Activated CD8-positive, alpha-beta T cell treated with anti-CD3 and anti-CD28 coated beads, Interleukin-2, amount 10 ng/mL, durations not matched to agents 7 days and 5 days (primary cell): ENCODE measurements at regions of chr12 and their contacts with region 1.

Region 1: DNA sequence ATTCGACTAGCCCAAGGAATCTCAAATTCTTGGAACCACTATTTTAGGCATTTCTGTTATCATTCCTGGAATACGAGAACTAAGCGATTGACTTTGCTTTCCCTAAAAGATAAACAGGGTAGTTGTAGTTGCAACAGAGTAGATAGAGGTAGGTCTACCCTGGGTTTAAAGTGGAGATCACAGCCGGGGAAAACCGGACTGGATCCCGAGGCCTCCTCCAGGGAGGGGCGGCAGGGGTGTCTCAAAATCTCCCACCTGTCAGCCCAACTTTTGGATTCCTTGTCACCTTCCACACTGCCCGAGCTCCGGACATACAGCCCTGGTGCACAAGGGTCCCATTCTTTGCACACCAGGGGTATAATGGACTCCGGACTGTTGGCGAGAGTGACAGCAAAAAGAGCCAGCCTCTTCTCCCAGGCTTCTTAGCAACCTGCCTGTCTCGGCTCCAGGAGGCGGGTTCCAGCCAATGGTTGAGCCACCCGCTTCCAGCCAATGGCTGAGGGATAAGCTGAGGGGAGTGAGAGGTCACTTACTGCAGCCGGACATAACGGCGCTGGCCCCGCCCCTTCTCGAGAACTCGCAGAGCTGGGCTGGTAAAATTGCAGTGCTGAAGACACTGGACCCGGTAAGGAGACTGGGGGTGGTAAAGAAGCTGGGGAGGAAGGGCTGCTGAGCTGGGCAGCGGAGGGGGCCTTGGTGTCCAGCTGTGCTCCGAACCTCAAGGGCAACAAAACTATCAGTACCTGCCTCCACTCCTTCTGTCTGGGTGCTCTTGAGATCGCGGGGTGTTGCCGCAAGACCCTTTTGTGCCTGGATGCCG is at the start of gene SUOX:
- DNase-seq: peak; percentile 63
- ATAC-seq: peak; percentile 73
- H3K4me3 Mint-ChIP-seq: peak within 1 kb of the TSS; percentile 76
- H3K27ac Mint-ChIP-seq: peak within 1 kb of the TSS; percentile 58
- H3K4me1 Mint-ChIP-seq: peaks cover 37% of the 10 kb centered on the region
- H3K27me3 Mint-ChIP-seq: no peaks in the 10 kb centered on the region
- total RNA-seq, gene SUOX: 5.8 to 6.8 TPM

Region 2: GRCh38 chr12:55982319-55982936 is 14.5 kb before region 1 on chr12:
- CTCF ChIA-PET with region 1: interaction called, 30 read pairs
- POLR2A ChIA-PET with region 1: interaction called, 4 read pairs
- DNase-seq: no peak
- ATAC-seq: peak; percentile 47
- H3K4me3 Mint-ChIP-seq: no peak overlapping the region
- H3K27ac Mint-ChIP-seq: no peak overlapping the region
- H3K4me1 Mint-ChIP-seq: peaks cover 6% of the 10 kb centered on the region
- H3K27me3 Mint-ChIP-seq: no peaks in the 10 kb centered on the region

Region 3: DNA sequence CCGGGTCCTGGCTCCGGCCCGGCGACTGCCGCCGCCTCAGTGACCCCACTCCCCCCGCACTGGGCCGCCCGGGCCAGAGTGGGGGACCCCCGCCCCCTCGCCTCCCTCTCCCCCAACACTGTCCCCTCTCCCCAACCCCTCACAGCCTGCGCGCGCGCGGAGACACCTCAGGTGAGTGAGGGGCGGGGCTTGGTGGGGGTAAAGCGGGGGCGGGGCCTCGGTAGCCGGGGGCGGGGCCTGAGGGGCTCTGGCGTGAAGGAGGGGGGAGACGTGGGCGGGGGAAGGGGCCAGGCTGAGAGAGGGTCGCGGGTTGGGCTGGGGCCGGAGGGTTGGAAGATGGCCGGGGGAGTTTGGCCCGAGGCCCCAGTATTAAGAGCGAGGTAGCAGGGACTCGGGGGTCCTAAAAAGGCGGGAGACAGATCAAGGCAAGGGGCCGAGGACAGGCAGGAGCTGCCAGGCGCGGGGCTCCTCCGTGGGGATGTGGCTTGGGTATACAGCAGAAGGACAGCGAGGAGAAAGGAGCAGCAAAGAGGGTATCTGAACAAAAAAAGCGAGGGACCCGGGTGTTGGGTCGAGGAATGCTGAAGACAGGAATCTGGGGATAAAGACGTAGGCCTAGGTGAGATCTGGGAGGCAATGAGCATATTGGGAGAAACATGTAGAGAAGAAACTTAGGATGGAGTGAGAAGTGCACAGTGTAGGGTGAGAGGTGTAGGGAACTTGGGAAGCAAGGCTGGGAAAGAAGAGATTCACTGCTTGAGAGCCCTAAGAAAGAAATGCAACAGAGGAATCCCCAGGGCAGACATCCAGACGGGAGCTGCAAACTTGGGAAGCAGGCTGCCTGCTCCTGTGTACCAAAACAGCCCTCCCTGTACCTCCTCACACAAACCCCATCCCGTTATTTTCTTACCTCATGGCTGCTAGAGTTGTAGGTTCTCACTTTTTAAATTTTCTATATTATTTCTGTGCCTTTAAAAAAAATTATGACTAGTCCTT is 10.9 kb after region 1 on chr12:
- CTCF ChIA-PET with region 1: interaction called, 33 read pairs
- POLR2A ChIA-PET with region 1: interaction called, 6 read pairs
- DNase-seq: peak; percentile 71
- ATAC-seq: peak; percentile 87
- H3K4me3 Mint-ChIP-seq: peak overlapping the region; percentile 82
- H3K27ac Mint-ChIP-seq: peak overlapping the region; percentile 86
- H3K4me1 Mint-ChIP-seq: peaks cover 29% of the 10 kb centered on the region
- H3K27me3 Mint-ChIP-seq: no peaks in the 10 kb centered on the region

Region 4: GRCh38 chr12:56014206-56014605 is 17.3 kb after region 1 on chr12:
- CTCF ChIA-PET with region 1: interaction called, 25 read pairs
- POLR2A ChIA-PET with region 1: interaction called, 4 read pairs
- DNase-seq: no peak
- ATAC-seq: no peak
- H3K4me3 Mint-ChIP-seq: no peak overlapping the region
- H3K27ac Mint-ChIP-seq: no peak overlapping the region
- H3K4me1 Mint-ChIP-seq: peaks cover 17% of the 10 kb centered on the region
- H3K27me3 Mint-ChIP-seq: no peaks in the 10 kb centered on the region

Region 5: DNA sequence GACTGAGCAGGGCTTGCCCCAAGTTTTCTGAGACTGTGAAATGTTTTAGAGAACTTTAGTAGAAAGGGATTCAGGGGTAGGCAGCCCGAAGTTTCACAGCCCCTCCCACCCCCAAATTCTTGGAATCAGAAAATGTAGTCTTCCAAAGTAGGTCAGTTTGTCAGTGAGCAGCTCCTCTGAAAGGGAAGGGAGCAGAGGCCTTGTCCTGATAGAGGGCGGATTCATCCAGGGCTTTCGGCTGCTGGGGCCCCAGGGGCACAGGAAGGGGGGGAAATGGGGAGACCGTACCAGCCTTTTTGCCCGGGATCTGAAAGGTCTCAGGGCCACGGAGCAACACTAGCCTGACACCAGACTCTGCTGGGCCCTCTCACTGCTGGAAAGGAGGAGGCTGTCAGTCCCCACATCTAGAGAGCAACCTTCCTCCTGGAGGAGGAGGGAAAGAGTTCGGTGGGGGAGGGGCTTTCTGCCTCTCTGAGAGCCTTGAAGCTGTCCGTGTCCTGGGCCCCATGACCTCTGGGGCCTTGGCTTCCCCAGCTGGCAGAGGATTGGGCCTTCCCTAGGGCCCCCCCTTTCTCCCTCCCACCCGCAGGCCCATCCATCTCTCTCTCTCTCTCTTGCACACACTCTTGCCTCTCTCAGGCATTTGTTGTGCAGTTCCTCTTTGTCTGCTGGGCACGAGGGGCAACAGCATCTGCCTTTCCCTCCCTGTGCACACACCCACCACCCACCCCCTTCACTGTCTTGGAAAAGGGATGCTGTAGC is 23.7 kb after region 1 on chr12 and contains the start of gene IKZF4:
- CTCF ChIA-PET with region 1: interaction called, 34 read pairs
- POLR2A ChIA-PET with region 1: no interaction called
- DNase-seq: peak; percentile 42
- ATAC-seq: peak; percentile 37
- H3K4me3 Mint-ChIP-seq: peak within 1 kb of the TSS; percentile 88
- H3K27ac Mint-ChIP-seq: peak within 1 kb of the TSS; percentile 96
- H3K4me1 Mint-ChIP-seq: peaks cover 53% of the 10 kb centered on the region
- H3K27me3 Mint-ChIP-seq: no peaks in the 10 kb centered on the region
- total RNA-seq, gene IKZF4: 19.9 to 20.7 TPM

Region 6: DNA sequence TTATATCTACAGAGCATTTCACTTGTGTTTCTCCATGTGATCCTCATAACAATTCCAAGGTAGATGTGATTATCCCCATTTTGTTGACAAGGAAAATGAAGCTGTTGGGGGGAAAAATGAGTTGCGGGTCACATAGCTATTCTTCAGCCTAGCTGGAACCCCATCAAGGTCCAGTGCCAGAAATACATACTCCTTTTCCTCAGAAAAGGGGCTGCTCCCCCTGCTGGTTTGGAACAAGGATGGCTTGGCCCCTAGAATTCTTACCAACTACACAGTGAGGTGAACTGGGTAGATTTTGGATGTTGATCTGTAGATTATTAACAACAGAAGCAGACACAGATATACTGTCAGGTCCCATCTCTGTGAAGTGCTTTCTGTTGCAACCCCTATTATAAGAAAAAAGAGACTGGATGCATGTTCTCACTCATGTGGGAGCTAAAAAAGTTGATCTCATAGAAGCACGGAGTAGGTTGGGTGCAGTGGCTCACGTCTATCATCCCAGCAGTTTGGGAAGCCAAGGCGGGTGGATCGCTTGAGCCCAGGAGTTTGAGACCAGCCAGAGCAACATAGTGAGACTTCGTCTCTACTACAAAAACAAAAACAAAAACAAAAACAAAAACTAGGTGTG is 32.9 kb after region 1 on chr12:
- CTCF ChIA-PET with region 1: interaction called, 60 read pairs
- POLR2A ChIA-PET with region 1: interaction called, 3 read pairs
- DNase-seq: peak; percentile 64
- ATAC-seq: peak; percentile 64
- H3K4me3 Mint-ChIP-seq: no peak overlapping the region
- H3K27ac Mint-ChIP-seq: peak overlapping the region; percentile 8
- H3K4me1 Mint-ChIP-seq: peaks cover 54% of the 10 kb centered on the region
- H3K27me3 Mint-ChIP-seq: no peaks in the 10 kb centered on the region

Region 7: DNA sequence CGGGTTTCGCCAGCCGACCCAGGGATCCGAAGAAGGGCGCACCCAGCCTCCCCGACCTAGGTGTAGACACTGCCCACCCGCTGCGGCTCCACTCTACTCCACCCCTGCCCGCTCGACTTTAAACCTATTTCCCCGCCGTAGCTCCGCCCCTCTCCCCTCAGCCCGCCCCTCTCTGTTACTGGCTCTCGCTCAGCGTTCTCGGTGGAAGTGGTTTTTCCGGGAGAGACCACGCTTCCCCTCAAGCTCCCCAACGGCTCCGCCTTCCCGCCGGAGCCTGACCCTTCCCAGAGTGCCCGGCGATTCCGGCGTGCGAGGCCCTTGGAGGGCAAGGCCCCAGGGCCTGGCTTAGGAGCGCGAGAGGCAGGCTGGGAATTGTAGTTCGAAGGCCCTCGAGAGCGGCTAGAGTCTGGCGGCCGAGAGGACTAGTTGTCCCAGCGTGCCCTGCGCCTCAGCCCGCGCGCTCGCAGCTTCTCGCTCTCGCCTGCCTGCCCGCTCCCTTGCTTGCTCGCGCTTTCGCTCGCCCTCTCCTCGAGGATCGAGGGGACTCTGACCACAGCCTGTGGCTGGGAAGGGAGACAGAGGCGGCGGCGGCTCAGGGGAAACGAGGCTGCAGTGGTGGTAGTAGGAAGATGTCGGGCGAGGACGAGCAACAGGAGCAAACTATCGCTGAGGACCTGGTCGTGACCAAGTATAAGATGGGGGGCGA is 107.3 kb after region 1 on chr12 and contains the start of gene PA2G4:
- CTCF ChIA-PET with region 1: interaction called, 13 read pairs
- POLR2A ChIA-PET with region 1: interaction called, 6 read pairs
- DNase-seq: peak; percentile 99
- ATAC-seq: peak; percentile 94
- H3K4me3 Mint-ChIP-seq: peak within 1 kb of the TSS; percentile 100
- H3K27ac Mint-ChIP-seq: peak within 1 kb of the TSS; percentile 98
- H3K4me1 Mint-ChIP-seq: peaks cover 64% of the 10 kb centered on the region
- H3K27me3 Mint-ChIP-seq: no peaks in the 10 kb centered on the region
- total RNA-seq, gene PA2G4: 316 to 323 TPM

Region 8: DNA sequence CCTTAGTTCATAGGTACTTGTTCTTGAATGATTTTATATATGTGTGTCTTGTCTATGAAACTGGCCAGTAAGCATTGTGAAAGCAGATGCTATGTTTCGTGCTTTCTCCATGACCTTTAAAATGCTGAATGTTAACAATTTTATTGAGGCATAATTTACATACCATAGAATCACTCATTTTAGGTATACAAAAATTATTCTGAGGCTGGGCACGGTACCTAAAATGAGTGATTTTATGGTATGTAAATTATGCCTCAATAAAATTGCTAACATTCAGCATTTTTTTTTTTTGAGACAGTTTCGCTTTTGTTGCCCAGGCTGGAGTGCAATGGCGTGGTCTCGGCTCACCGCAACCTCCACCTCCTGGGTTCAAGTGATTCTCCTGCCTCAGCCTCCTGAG is 138.0 kb after region 1 on chr12:
- CTCF ChIA-PET with region 1: no interaction called
- POLR2A ChIA-PET with region 1: no interaction called
- DNase-seq: no peak
- ATAC-seq: no peak
- H3K4me3 Mint-ChIP-seq: no peak overlapping the region
- H3K27ac Mint-ChIP-seq: no peak overlapping the region
- H3K4me1 Mint-ChIP-seq: peaks cover 77% of the 10 kb centered on the region
- H3K27me3 Mint-ChIP-seq: no peaks in the 10 kb centered on the region